OCI-LY7 (cell line): ENCODE measurements at regions of chr2 and their contacts with region 1.

Region 1: DNA sequence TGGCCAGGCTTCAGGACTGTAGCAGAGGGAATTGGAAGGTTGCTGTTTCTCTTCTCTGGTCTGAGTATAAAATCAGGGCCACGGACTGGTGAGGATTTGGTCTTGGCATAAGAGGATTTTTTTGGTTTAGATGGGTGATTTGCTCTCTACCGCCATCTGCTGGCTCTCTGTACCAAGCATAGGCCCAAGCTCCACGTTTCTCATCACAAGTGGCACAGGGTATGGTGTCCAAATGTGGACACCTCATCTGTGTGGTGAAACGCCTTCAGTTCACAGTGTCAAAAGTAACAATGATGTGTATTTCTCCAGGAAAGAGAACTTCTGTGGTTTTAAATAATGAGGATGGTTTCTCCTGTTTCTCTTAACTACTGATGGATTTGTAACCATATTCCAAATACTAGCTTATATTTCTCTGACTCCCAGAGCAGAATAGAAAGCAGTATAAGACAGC is 115.1 kb downstream of the EML6 start:
- DNase-seq: peak; percentile 82
- H3K4me3 ChIP-seq: no peak overlapping the region
- H3K27ac ChIP-seq: peak overlapping the region; percentile 35
- H3K4me1 ChIP-seq: peaks cover 24% of the 10 kb centered on the region
- CTCF ChIP-seq: peak; percentile 98

Region 2: GRCh38 chr2:54665436-54665856 is 173.2 kb before region 1 on chr2:
- CTCF ChIA-PET with region 1: no interaction called
- POLR2A ChIA-PET with region 1: no interaction called
- intact Hi-C with region 1: loop called (anchors 5 kb)
- DNase-seq: peak; percentile 74
- H3K4me3 ChIP-seq: no peak overlapping the region
- H3K27ac ChIP-seq: no peak overlapping the region
- H3K4me1 ChIP-seq: no peaks in the 10 kb centered on the region
- CTCF ChIP-seq: peak; percentile 91

Region 3: DNA sequence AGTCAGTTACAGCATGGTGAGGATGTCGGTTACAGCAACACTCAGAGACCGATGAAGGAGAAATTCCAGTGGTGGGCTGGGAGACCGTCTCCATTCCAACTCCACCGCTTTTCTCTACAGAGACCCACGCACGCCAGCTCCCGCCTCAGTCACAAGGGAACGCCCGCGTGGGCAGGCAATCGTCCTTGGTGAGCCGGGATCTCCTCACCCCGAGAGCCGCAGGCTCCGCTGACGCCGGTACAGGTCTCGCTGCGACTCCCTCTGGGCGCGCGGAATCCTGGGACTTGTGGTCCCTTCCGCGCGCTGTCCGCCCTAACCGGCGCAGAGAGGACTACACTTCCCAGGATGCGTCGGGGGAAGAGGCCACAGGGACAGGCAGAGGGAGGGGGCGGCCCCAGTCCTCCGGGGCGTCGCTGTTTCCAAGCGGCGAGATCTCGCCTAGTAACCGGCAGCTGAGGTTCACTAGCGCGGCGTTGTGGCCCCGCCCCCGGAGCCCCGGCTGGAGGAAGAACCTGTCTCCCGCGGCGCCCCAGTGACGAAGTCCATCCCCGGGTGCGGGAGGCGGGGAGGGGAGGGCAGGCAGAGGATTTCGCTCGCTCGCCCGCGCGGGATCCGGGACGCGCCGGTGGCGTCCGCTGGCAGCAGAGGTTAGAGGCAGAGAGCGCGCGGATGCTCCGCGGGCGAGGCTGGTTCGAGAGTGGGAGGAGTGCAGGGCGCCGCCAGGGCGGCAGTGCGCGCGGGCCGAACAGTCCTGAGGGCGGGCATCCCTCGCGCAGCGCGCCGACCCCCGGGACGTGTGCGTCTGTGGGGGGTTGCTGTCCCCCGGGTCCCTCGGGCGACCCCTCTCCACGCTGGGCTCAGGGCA is 115.2 kb before region 1 on chr2 and contains the start of gene EML6:
- CTCF ChIA-PET with region 1: no interaction called
- POLR2A ChIA-PET with region 1: no interaction called
- intact Hi-C with region 1: loop called (anchors 1 kb)
- DNase-seq: peak; percentile 99
- H3K4me3 ChIP-seq: peak within 1 kb of the TSS; percentile 79
- H3K27ac ChIP-seq: peak within 1 kb of the TSS; percentile 69
- H3K4me1 ChIP-seq: peaks cover 42% of the 10 kb centered on the region
- CTCF ChIP-seq: peak; percentile 65
- total RNA-seq, gene EML6: 298 and 367 TPM in 2 replicates

Region 4: DNA sequence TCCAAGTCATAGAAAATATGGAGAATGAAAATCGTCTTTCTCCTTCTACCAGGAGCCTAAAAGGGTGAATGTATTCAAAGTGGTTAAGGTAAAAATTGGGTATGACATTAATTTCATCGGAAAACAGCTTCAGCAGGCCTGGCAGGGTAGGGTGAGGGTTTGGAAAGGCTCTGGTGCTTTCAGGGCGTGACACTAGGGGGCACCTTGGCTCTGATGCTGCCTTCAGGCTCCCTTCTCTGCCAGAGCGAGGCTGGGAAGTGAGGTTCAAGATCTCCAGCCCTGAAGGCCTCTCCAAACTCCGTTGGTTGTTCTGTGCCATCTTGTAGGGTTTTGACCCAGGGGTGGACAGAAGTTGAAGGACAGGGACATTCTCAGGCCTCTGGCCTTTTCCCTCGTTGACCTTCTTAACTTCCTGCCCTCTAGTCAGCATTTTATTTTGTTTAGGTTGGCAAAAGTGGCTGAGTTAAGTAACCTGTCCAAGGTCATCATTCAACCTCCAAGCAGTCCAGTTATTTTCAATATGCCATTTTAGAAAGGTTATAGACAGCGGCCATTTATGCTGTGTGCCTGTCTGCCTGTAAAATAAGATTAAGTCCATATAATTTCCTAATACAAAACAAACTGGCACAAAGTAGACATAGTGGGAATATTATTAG is 74.8 kb before region 1 on chr2:
- CTCF ChIA-PET with region 1: no interaction called
- POLR2A ChIA-PET with region 1: interaction called, 4 read pairs
- intact Hi-C with region 1: loop called (anchors 1 kb)
- DNase-seq: peak; percentile 40
- H3K4me3 ChIP-seq: no peak overlapping the region
- H3K27ac ChIP-seq: no peak overlapping the region
- H3K4me1 ChIP-seq: peaks cover 91% of the 10 kb centered on the region
- CTCF ChIP-seq: peak; percentile 84

Region 5: GRCh38 chr2:54820558-54820957 is 18.1 kb before region 1 on chr2:
- CTCF ChIA-PET with region 1: no interaction called
- POLR2A ChIA-PET with region 1: interaction called, 4 read pairs
- intact Hi-C with region 1: loop called (anchors 2 kb)
- DNase-seq: no peak
- H3K4me3 ChIP-seq: no peak overlapping the region
- H3K27ac ChIP-seq: no peak overlapping the region
- H3K4me1 ChIP-seq: no peaks in the 10 kb centered on the region
- CTCF ChIP-seq: no peak